ENCODE measurements at regions of chr22 and their contacts with region 1.

Region 1: DNA sequence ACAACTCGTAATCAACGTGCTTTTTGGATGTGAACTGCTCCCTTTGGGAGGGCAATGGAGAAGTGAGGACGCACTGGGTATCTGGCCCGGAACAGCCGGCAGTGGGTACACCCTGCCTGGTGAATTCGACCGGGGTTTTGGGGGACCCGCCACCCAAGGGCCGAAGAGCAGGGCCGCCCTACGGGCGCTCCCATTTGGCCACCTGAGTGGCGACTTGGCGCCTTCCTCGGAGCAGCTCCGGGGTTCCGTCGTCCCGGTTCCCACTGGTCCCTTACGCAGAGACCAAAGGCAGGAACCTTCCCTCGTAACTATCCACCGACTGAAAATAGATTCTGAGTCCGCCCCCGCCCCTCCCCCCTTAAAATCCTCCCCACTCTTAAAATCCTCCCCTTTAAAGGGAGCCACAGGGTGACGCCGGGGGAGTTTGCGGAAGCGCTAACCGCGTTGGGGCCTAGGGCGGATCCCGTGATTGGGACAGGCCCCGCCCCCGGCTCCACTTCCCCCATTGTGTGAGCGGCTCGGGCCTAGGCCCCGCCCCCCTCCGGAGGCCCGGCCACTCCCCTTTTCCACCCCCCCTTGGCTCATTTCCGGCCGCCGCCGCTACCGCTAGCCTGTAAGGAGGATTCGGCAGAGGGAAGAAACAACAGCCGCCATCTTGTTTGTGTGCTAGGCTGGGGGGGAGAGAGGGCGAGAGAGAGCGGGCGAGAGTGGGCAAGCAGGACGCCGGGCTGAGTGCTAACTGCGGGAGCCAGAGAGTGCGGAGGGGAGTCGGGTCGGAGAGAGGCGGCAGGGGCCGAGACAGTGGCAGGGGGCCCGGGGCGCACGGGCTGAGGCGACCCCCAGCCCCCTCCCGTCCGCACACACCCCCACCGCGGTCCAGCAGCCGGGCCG is 1.0 kb upstream of the EP300 start:
- DNase-seq: peak; percentile 99 to 100 (median 100)
- H3K4me3 ChIP-seq: peak overlapping the region; percentile 91
- H3K27ac ChIP-seq: peak overlapping the region; percentile 100
- H3K4me1 ChIP-seq: peaks cover 7% of the 10 kb centered on the region
- H3K27me3 ChIP-seq: no peaks in the 10 kb centered on the region
- CTCF ChIP-seq: peak in 1 of 3 donors; percentile 7
- EP300 ChIP-seq: peak; percentile 33
- POLR2A ChIP-seq: peak; percentile 90

Region 2: GRCh38 chr22:40950962-40951794 is 140.2 kb before region 1 on chr22 and contains the start of gene RBX1:
- intact Hi-C with region 1: loop called (anchors 1 to 5 kb)
- DNase-seq: peak; percentile 97 to 98 (median 98)
- H3K4me3 ChIP-seq: peak within 1 kb of the TSS; percentile 77
- H3K27ac ChIP-seq: peak within 1 kb of the TSS; percentile 81 to 96
- H3K4me1 ChIP-seq: peaks cover 6% of the 10 kb centered on the region
- H3K27me3 ChIP-seq: no peaks in the 10 kb centered on the region
- CTCF ChIP-seq: no peak
- EP300 ChIP-seq: no peak
- POLR2A ChIP-seq: peak; percentile 89
- total RNA-seq, gene RBX1: 22.3 to 45.1 (median 38.7) TPM

Region 3: DNA sequence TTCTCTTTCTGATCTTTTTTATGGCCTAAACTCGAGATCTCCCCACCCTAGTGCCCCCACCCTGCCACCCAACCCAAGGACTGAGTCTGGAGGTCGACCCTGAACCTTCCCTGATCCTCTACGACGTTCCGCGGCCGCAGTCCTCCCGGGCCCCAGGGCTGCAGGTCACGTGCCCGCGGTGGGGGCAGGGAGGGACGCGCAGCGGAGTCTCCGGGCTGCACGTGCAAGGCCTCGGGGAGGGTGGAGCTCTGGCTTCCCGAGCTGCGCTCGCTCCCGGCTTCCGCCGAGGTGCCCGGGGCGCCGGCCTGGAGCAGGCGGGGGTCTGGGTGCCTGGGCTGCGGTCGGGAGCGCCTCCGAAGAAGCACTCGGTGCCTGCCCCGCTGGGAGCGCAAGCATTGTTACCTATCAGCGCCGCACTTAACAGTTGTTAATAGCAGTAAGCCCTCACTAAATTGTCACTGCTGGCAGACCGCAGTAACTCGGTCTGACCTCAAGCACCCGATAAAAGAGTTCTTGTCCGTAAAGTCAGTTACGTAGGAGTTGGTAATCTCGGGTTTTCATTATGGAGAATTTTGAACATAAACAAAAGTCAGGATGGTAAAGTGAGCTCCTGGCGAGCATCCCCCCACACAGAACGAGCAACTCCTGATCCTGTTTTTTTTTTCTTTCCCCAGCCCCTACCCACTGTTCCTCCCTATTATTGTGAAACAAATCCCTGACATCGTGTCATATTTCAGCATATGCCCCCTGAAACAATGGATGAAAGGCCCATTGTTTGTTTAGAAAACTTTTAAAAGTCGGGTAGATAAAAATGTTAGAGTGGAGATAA is 68.7 kb before region 1 on chr22:
- intact Hi-C with region 1: loop called (anchors 2 to 10 kb)
- DNase-seq: peak; percentile 94 to 97 (median 96)
- H3K4me3 ChIP-seq: peak overlapping the region; percentile 70
- H3K27ac ChIP-seq: peak overlapping the region; percentile 92 to 99
- H3K4me1 ChIP-seq: no peaks in the 10 kb centered on the region
- H3K27me3 ChIP-seq: no peaks in the 10 kb centered on the region
- CTCF ChIP-seq: peak in 1 of 3 donors; percentile 9
- EP300 ChIP-seq: no peak
- POLR2A ChIP-seq: peak; percentile 86

Region 4: GRCh38 chr22:41397143-41397811 is 305.9 kb after region 1 on chr22:
- intact Hi-C with region 1: no loop called
- DNase-seq: no peak
- H3K4me3 ChIP-seq: no peak overlapping the region
- H3K27ac ChIP-seq: no peak overlapping the region
- H3K4me1 ChIP-seq: peaks cover 6% of the 10 kb centered on the region
- H3K27me3 ChIP-seq: no peaks in the 10 kb centered on the region
- CTCF ChIP-seq: no peak
- EP300 ChIP-seq: no peak
- POLR2A ChIP-seq: no peak